Activated T-helper 2 cell treated with anti-CD3 and anti-CD28 coated beads, Interferon-gamma antibody, Interleukin-2, Interleukin-4, amounts not matched to agents 10 μg/mL and 5 μg/mL and 100 μg/mL, durations not matched to agents 14 hours and 24 hours and 36 hours (primary cell): ENCODE measurements at regions of chr5 and their contacts with region 1.

Region 1: DNA sequence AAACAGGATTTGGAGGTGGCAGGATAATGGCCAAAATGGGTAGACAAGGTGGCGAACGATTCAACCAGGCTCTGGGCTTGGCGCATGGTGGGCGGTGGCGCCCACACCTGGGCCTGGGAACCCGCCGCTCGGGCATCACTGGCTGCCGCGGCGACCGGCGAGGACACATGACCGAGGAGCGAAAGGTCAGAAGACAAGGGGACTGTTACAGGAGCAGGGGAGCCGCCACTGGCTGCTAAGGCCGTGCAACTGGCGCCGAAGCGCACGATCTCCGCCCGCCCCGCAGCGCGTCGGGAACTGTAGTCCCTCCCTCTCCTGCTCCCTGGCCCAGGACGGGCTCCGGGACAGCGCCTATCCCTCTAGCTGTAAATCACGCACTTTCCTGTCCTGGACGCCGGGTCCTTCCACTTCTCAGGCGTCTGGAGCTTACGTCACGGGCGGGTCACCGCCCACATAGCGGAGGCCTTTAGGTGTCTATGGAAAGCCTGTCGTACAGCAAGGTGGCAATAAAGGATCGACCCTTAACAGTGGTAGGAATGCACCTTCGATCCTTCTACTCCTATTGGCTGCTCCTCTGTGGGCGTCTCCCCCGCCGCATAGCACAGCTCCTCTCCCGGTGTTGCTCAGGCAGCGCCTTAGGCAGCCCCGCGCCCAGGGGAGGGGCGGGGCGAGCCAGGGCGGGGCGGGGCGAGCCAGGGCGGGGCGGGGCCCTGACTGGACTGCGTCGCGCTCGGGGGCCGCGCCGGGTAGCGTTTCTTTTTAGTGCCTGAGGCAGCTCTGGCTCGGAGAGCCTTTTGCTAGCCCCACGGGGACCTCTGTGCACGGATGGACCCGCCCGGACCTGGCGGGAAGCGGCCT is at the start of gene ICE1:
- DNase-seq: peak; percentile 91
- H3K4me3 Mint-ChIP-seq: peak within 1 kb of the TSS; percentile 91
- H3K27ac Mint-ChIP-seq: peak within 1 kb of the TSS; percentile 90
- H3K4me1 Mint-ChIP-seq: peaks cover 16% of the 10 kb centered on the region
- H3K27me3 Mint-ChIP-seq: no peaks in the 10 kb centered on the region
- total RNA-seq, gene ICE1: 31.8 and 33.9 TPM in 2 replicates

Region 2: DNA sequence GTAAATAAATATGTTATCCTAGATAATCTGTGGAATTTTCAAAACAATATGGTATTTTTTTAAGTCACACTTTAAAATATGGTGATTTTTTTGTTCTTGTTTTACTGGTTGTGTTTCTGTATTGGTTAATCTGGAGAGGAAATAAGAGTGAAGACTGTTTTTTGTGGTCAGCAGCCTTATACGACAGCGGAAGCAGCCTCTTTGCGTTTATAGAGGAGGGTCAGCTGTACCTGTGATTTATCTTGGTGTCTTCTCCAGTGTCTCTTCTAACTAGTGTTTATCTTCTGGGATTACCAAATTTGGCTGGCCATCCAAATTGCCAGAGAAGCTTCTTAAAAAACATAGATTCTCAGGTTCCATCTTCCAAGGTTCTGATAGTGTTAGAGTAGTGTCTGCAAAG is 59.0 kb after region 1 on chr5:
- intact Hi-C with region 1: loop called (anchors 5 kb)
- DNase-seq: no peak
- H3K4me3 Mint-ChIP-seq: peak overlapping the region; percentile 9
- H3K27ac Mint-ChIP-seq: peak overlapping the region; percentile 57
- H3K4me1 Mint-ChIP-seq: peaks cover 18% of the 10 kb centered on the region
- H3K27me3 Mint-ChIP-seq: no peaks in the 10 kb centered on the region

Region 3: GRCh38 chr5:5505815-5506214 is 83.6 kb after region 1 on chr5:
- intact Hi-C with region 1: no loop called
- DNase-seq: no peak
- H3K4me3 Mint-ChIP-seq: no peak overlapping the region
- H3K27ac Mint-ChIP-seq: no peak overlapping the region
- H3K4me1 Mint-ChIP-seq: peaks cover 3% of the 10 kb centered on the region
- H3K27me3 Mint-ChIP-seq: peaks cover 26% of the 10 kb centered on the region

Region 4: GRCh38 chr5:6377905-6378765 is 955.9 kb after region 1 on chr5 and contains the start of gene MED10:
- intact Hi-C with region 1: loop called (anchors 1 kb)
- DNase-seq: peak; percentile 95
- H3K4me3 Mint-ChIP-seq: peak within 1 kb of the TSS; percentile 96
- H3K27ac Mint-ChIP-seq: peak within 1 kb of the TSS; percentile 93
- H3K4me1 Mint-ChIP-seq: peaks cover 37% of the 10 kb centered on the region
- H3K27me3 Mint-ChIP-seq: peaks cover 3% of the 10 kb centered on the region
- total RNA-seq, gene MED10: 53.3 and 56.5 TPM in 2 replicates

Region 5: DNA sequence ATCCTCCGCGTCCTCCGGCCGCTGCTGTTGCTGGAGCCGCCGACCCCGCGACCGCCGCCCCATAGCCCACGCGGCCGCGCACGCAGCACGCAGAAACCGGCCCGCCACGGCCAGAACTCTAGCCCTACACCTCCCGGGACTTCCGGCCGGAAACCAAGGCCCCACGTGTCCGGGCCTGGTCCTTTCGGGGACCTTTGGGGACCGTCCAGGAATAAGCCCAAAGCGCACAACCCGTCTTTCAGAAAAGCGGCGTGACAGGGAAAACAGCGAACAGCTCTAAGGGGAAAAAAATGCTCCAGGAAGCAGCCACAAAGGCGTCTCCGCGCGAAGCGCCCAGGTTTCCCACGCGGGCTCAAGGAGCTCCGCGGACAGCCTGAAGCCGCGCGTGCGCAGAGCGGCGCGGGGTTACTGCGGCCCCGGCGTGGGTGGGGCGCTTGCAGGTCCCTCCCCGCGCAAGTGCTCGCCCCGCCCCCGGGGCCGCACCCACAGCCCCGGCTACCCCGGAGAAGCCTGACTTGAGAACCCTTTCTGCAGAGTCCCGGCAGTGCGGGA is 1210.8 kb after region 1 on chr5 and contains the starts of genes NSUN2 and SRD5A1:
- intact Hi-C with region 1: loop called (anchors 2 kb)
- DNase-seq: peak; percentile 89
- H3K4me3 Mint-ChIP-seq: peak within 1 kb of the TSS; percentile 94
- H3K27ac Mint-ChIP-seq: peak within 1 kb of the TSS; percentile 98
- H3K4me1 Mint-ChIP-seq: peaks cover 28% of the 10 kb centered on the region
- H3K27me3 Mint-ChIP-seq: no peaks in the 10 kb centered on the region
- total RNA-seq, gene NSUN2: 124 and 125 TPM in 2 replicates
- total RNA-seq, gene SRD5A1: 15.3 and 16.0 TPM in 2 replicates

Region 6: GRCh38 chr5:6827526-6828219 is 1405.5 kb after region 1 on chr5:
- intact Hi-C with region 1: loop called (anchors 2 kb)
- DNase-seq: peak; percentile 51
- H3K4me3 Mint-ChIP-seq: peak overlapping the region; percentile 74
- H3K27ac Mint-ChIP-seq: peak overlapping the region; percentile 93
- H3K4me1 Mint-ChIP-seq: peaks cover 61% of the 10 kb centered on the region
- H3K27me3 Mint-ChIP-seq: peaks cover 10% of the 10 kb centered on the region